Activated B cell treated with CpG ODN at 0.5 μM for 24 hours (primary cell): ENCODE measurements at regions of chr10 and their contacts with region 1.

Region 1: GRCh38 chr10:32378363-32379317 is 31.7 kb upstream of the EPC1 start:
- DNase-seq: peak; percentile 73
- ATAC-seq: peak; percentile 94
- H3K4me3 Mint-ChIP-seq: no peak overlapping the region
- H3K27ac Mint-ChIP-seq: no peak overlapping the region
- H3K4me1 Mint-ChIP-seq: peaks cover 21% of the 10 kb centered on the region
- H3K27me3 Mint-ChIP-seq: no peaks in the 10 kb centered on the region
- CTCF ChIP-seq: no peak

Region 2: DNA sequence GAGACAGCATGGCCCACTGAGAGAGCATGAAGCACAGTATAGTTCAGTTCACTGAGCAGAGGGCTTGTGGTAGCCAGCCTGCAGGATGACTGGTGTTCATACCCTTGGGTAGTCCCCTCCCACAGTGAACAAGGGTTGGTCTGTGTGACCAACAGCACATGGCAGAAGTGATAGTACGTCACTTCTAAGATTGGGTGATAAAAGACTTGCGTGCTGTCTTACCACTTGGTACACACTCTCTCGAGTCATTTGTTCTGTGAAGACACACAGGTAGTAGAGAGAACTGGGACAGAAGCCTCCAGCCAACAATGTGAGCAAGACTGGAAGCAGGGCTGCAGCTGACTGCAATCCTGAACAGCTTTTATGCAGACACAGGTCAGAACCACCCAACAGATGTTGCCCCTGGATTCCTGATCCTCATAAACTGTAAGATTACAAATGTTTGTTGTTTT is 46.3 kb before region 1 on chr10:
- CTCF ChIA-PET with region 1: no interaction called
- POLR2A ChIA-PET with region 1: no interaction called
- intact Hi-C with region 1: loop called (anchors 1 kb)
- DNase-seq: peak; percentile 25
- ATAC-seq: peak; percentile 100
- H3K4me3 Mint-ChIP-seq: peak overlapping the region; percentile 42
- H3K27ac Mint-ChIP-seq: peak overlapping the region; percentile 85
- H3K4me1 Mint-ChIP-seq: peaks cover 96% of the 10 kb centered on the region
- H3K27me3 Mint-ChIP-seq: no peaks in the 10 kb centered on the region
- CTCF ChIP-seq: no peak

Region 3: GRCh38 chr10:33047655-33048054 is 669.0 kb after region 1 on chr10:
- CTCF ChIA-PET with region 1: no interaction called
- POLR2A ChIA-PET with region 1: no interaction called
- intact Hi-C with region 1: no loop called
- DNase-seq: no peak
- ATAC-seq: no peak
- H3K4me3 Mint-ChIP-seq: no peak overlapping the region
- H3K27ac Mint-ChIP-seq: no peak overlapping the region
- H3K4me1 Mint-ChIP-seq: no peaks in the 10 kb centered on the region
- H3K27me3 Mint-ChIP-seq: no peaks in the 10 kb centered on the region
- CTCF ChIP-seq: no peak